Transverse colon (tissue), 4 donors: ENCODE measurements at regions of chr20 and their contacts with region 1.

Region 1: GRCh38 chr20:49166534-49167449 is 21.3 kb downstream of the STAU1 start:
- DNase-seq: no peak
- H3K4me3 ChIP-seq: no peak overlapping the region
- H3K27ac ChIP-seq: peak overlapping the region; percentile 14 to 51 (median 27)
- H3K4me1 ChIP-seq: peaks cover 16 to 39% (median 22%) of the 10 kb centered on the region in 4 donors
- H3K27me3 ChIP-seq: no peaks in the 10 kb centered on the region
- CTCF ChIP-seq: no peak
- EP300 ChIP-seq: no peak
- POLR2A ChIP-seq: no peak

Region 2: GRCh38 chr20:48635433-48636310 is 531.1 kb before region 1 on chr20:
- in situ Hi-C with region 1: no loop called
- intact Hi-C with region 1: no loop called
- DNase-seq: no peak
- H3K4me3 ChIP-seq: no peak overlapping the region
- H3K27ac ChIP-seq: no peak overlapping the region
- H3K4me1 ChIP-seq: no peaks in the 10 kb centered on the region
- H3K27me3 ChIP-seq: no peaks in the 10 kb centered on the region
- CTCF ChIP-seq: peak; percentile 23 to 77 (median 68)
- EP300 ChIP-seq: no peak
- POLR2A ChIP-seq: no peak

Region 3: GRCh38 chr20:49148601-49149000 is 18.2 kb before region 1 on chr20:
- in situ Hi-C with region 1: no loop called
- intact Hi-C with region 1: loop called (anchors 1 kb)
- DNase-seq: no peak
- H3K4me3 ChIP-seq: no peak overlapping the region
- H3K27ac ChIP-seq: no peak overlapping the region
- H3K4me1 ChIP-seq: no peaks in the 10 kb centered on the region
- H3K27me3 ChIP-seq: no peaks in the 10 kb centered on the region
- CTCF ChIP-seq: no peak
- EP300 ChIP-seq: no peak
- POLR2A ChIP-seq: no peak

Region 4: DNA sequence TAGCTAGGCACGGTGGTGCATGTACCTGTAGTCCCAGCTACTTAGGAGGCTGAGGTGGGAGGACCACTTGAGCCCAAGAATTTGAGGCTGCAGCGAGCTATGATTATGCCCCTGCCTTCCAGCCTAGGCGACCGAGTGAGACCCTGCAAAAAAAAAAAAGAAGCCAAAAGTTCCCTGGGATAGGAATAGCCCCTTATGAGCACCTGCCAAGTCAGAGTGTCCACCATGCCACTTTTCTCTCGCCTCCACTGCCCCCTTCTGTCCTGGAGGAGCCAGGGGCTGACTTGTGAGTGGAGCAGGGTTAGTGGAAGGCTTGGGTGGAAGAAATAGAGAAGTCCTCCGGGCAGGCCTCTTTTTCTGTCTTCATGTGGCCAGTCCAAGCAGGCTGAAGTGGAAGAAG is 40.3 kb after region 1 on chr20:
- in situ Hi-C with region 1: no loop called
- intact Hi-C with region 1: no loop called
- DNase-seq: no peak
- H3K4me3 ChIP-seq: no peak overlapping the region
- H3K27ac ChIP-seq: no peak overlapping the region
- H3K4me1 ChIP-seq: no peaks in the 10 kb centered on the region
- H3K27me3 ChIP-seq: no peaks in the 10 kb centered on the region
- CTCF ChIP-seq: no peak
- EP300 ChIP-seq: no peak
- POLR2A ChIP-seq: no peak

Region 5: GRCh38 chr20:49356676-49357075 is 189.9 kb after region 1 on chr20:
- in situ Hi-C with region 1: no loop called
- intact Hi-C with region 1: no loop called
- DNase-seq: no peak
- H3K4me3 ChIP-seq: no peak overlapping the region
- H3K27ac ChIP-seq: no peak overlapping the region
- H3K4me1 ChIP-seq: peaks cover 0 to 4% (median 0%) of the 10 kb centered on the region in 4 donors
- H3K27me3 ChIP-seq: peaks cover 2% of the 10 kb centered on the region
- CTCF ChIP-seq: no peak
- EP300 ChIP-seq: no peak
- POLR2A ChIP-seq: no peak